Activated T-helper 2 cell treated with anti-CD3 and anti-CD28 coated beads, Interferon-gamma antibody, Interleukin-2, Interleukin-4, amounts not matched to agents 10 μg/mL and 5 μg/mL and 100 μg/mL, durations not matched to agents 14 hours and 24 hours and 36 hours (primary cell): ENCODE measurements at regions of chr2 and their contacts with region 1.

Region 1: DNA sequence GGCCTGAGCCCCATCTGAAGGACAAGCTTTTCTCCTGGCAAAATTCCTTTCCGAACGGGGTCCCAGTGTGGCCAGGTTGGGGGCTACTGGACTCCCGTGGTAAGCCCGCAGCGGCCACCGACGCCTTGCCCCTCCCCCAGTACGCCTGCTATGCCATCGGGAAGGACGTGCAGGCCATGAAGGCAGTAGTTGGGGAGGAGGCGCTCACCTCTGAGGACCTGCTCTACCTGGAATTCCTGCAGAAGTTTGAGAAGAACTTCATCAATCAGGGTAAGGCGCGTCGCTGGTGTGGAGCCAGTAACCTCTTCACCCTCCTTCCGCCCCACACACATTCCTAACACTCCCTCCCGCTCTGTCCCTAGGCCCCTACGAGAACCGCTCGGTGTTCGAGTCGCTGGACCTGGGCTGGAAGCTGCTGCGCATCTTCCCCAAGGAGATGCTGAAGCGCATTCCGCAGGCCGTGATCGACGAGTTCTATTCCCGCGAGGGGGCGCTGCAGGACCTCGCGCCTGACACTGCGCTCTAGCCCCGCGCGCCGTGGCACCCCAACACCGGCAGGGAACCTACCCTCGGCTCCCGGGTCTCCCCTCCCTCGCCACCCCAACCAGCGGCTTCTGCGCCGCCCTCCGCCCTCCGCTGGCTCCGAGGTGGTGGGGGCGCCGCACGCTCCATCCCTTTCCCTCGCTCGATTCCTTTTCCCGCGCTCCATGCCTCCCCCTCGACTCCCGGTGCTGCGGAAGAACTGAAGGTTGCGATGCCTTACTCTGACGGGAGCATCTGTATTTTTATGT is 13.6 kb upstream of the ANKRD53 start:
- DNase-seq: peak; percentile 72
- H3K4me3 Mint-ChIP-seq: peak overlapping the region; percentile 80
- H3K27ac Mint-ChIP-seq: no peak overlapping the region
- H3K4me1 Mint-ChIP-seq: peaks cover 3% of the 10 kb centered on the region
- H3K27me3 Mint-ChIP-seq: peaks cover 38% of the 10 kb centered on the region

Region 2: DNA sequence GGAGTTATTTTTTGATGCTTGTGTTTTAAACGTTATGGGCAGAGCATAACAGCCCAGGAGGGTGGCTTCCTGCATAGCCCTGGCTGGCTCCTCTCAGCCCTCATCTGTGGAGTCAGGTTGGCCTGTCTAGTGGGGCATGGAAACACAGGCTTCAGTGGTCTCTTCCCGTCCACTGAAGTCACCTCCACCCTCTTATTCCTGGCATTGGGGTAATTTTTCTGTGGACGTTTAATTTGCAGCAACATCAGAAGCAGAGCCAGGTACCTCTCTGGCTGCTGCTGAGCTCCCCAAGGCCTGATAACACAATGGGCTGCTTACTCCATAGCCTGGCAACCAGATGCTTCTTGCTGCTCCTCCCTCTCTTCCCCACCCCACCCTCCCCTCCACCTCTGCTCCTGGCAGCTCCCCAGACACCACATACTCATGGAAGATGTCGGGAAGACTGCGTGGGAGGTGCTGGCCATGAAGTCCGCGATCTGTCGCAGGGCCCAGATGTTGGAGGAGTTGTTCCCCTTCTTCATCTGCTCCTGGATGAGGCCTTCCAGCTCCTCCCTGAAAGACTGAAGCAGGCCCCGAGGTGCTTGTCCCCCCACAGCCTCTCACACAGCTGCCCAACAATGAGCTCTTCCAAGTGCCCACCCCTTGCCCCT is 260.8 kb before region 1 on chr2:
- intact Hi-C with region 1: no loop called
- DNase-seq: no peak
- H3K4me3 Mint-ChIP-seq: no peak overlapping the region
- H3K27ac Mint-ChIP-seq: no peak overlapping the region
- H3K4me1 Mint-ChIP-seq: peaks cover 6% of the 10 kb centered on the region
- H3K27me3 Mint-ChIP-seq: peaks cover 2% of the 10 kb centered on the region

Region 3: GRCh38 chr2:70977605-70978205 is 12.9 kb after region 1 on chr2:
- intact Hi-C with region 1: loop called (anchors 1 kb)
- DNase-seq: no peak
- H3K4me3 Mint-ChIP-seq: peak overlapping the region; percentile 73
- H3K27ac Mint-ChIP-seq: peak overlapping the region; percentile 77
- H3K4me1 Mint-ChIP-seq: peaks cover 13% of the 10 kb centered on the region
- H3K27me3 Mint-ChIP-seq: peaks cover 8% of the 10 kb centered on the region

Region 4: DNA sequence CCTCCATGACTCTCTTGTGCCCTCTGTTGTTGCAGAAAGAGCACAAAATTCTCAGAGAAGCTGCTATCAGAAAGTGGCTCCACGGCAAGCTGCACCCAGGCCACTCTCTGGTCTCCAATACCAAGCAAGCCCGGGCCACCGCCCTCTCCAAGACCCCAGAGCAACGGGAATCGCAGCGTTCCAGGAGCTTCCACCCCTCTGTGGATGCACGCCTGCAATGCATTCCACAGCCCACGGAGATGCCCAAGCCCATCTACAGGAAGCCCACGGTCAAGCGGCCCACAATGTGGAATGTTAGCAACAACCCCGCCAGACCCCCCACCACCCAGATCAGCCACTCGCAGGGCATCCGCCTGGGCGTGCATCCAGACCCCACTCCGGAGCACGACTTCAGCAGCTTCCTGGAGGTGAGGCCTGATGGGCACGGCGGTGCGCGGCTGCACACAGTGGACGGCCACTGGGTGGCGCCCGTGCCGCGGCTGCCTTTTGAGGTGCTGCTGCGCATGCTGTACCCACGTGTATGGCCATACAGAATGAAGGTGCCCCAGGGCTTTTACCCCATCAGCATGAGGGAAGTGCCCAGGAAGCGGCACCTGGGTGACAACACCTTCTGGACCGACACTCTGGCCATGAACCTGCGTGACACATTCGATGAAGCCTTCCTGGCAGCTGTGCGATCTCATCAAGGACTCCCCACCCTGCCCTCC is 19.9 kb after region 1 on chr2:
- intact Hi-C with region 1: loop called (anchors 2 kb)
- DNase-seq: peak; percentile 75
- H3K4me3 Mint-ChIP-seq: no peak overlapping the region
- H3K27ac Mint-ChIP-seq: no peak overlapping the region
- H3K4me1 Mint-ChIP-seq: peaks cover 7% of the 10 kb centered on the region
- H3K27me3 Mint-ChIP-seq: no peaks in the 10 kb centered on the region